ENCODE measurements at regions of chr9 and their contacts with region 1.

Region 1: GRCh38 chr9:36190388-36191287 is at the start of gene CLTA:
- DNase-seq: peak; percentile 92 to 98
- ATAC-seq: peak; percentile 99 to 100 (median 99)
- H3K4me3 ChIP-seq: peak within 1 kb of the TSS; percentile 64 to 97 (median 85)
- H3K27ac ChIP-seq: peak within 1 kb of the TSS; percentile 48 to 95 (median 88)
- H3K4me1 ChIP-seq: peaks cover 12 to 45% (median 38%) of the 10 kb centered on the region in 9 donors
- H3K27me3 ChIP-seq: no peaks in the 10 kb centered on the region
- CTCF ChIP-seq: peak in 8 of 9 donors; percentile 40 to 72 (median 58)
- total RNA-seq, gene CLTA: 44.5 to 80.4 (median 48.8) TPM

Region 2: DNA sequence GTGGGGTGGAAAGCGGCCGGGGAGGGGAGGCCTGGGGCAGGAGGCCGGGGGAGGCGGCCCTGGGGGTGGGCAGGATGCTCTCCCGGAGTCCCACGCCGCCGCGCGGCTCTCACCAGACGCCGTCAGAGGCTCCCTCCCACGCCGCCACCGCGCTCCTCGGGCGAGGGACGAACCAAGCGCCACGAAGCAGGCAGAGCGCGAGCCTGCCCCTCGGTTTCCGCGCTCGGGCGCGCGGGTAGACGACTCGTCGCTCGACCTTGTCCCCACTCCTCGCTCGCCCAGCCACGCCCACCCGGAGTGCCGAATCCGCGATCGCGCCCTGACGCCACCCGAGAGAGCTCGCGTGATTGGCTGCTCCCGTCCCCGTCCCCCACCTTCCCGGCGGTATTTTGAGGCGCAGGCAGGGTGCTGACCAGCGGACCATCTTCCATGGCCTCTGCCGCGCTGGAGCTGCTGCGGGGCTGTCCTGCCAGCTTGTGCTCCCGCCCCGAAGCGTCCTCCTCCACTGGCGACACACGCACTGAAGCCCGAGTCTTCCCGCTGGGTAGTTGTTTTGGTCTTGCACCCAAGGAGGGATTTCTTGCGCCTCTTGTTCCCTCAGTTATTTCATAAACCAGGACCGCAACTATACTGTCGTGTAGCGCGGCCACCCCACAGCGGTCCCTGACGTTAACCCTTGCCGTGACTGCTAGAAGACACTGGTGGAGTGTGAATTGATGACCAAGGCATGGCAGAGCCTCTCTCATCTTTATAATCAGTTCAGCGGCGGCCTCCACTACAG is 67.8 kb after region 1 on chr9 and contains the start of gene GNE:
- intact Hi-C with region 1: loop called in 2 of 10 experiments (anchors 2 to 5 kb)
- DNase-seq: peak; percentile 99
- ATAC-seq: peak; percentile 98 to 99 (median 99)
- H3K4me3 ChIP-seq: peak within 1 kb of the TSS; percentile 66 to 99 (median 90)
- H3K27ac ChIP-seq: peak within 1 kb of the TSS; percentile 87 to 99 (median 98)
- H3K4me1 ChIP-seq: peaks cover 0 to 18% (median 11%) of the 10 kb centered on the region in 9 donors
- H3K27me3 ChIP-seq: no peaks in the 10 kb centered on the region
- CTCF ChIP-seq: peak in 1 of 9 donors; percentile 5
- total RNA-seq, gene GNE: 10.1 to 14.9 (median 12.5) TPM

Region 3: DNA sequence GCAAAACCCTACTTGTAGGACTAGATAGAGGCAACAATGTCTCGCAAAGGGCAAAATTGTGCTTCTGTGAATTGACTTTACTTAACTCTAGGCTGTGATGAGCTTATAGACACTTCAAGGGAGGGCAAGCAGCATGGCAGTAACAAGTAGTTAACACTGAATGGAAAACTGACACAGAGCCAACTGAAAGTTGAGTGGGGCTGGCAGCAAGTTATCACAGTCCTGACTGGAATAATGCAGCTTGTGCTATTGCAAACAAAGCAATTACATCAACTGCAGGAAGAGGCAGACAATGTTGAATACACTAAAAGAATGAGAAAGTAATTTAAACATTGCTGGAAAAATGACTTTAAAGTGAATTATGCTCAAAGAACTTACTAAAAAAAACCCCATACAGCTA is 147.2 kb after region 1 on chr9:
- intact Hi-C with region 1: no loop called
- DNase-seq: peak in 1 of 2 donors; percentile 74
- ATAC-seq: peak; percentile 67 to 97 (median 94)
- H3K4me3 ChIP-seq: no peak overlapping the region
- H3K27ac ChIP-seq: peak overlapping the region in 8 of 10 donors; percentile 6 to 61 (median 42)
- H3K4me1 ChIP-seq: peaks cover 0 to 16% (median 0%) of the 10 kb centered on the region in 9 donors
- H3K27me3 ChIP-seq: no peaks in the 10 kb centered on the region
- CTCF ChIP-seq: no peak

Region 4: GRCh38 chr9:36560857-36561221 is 370.2 kb after region 1 on chr9:
- intact Hi-C with region 1: loop called in 1 of 10 experiments (anchors 5 kb)
- DNase-seq: no peak
- ATAC-seq: no peak
- H3K4me3 ChIP-seq: no peak overlapping the region
- H3K27ac ChIP-seq: no peak overlapping the region
- H3K4me1 ChIP-seq: peaks cover 0 to 10% (median 0%) of the 10 kb centered on the region in 9 donors
- H3K27me3 ChIP-seq: no peaks in the 10 kb centered on the region
- CTCF ChIP-seq: no peak